PC-9 (cell line): ENCODE measurements at regions of chr1 and their contacts with region 1.

Region 1: GRCh38 chr1:94773931-94774422 is 46.2 kb upstream of the SLC44A3 start:
- DNase-seq: peak; percentile 48 to 92
- H3K4me3 ChIP-seq: no peak overlapping the region
- H3K27ac ChIP-seq: peak overlapping the region; percentile 85
- H3K4me1 ChIP-seq: peaks cover 69% of the 10 kb centered on the region
- H3K27me3 ChIP-seq: no peaks in the 10 kb centered on the region
- CTCF ChIP-seq: no peak

Region 2: GRCh38 chr1:94755675-94756074 is 18.3 kb before region 1 on chr1:
- CTCF ChIA-PET with region 1: interaction called, 10 read pairs
- POLR2A ChIA-PET with region 1: interaction called, 4 read pairs
- intact Hi-C with region 1: no loop called
- DNase-seq: no peak
- H3K4me3 ChIP-seq: no peak overlapping the region
- H3K27ac ChIP-seq: no peak overlapping the region
- H3K4me1 ChIP-seq: peaks cover 7% of the 10 kb centered on the region; the same call in 1 of the 2 replicates
- H3K27me3 ChIP-seq: no peaks in the 10 kb centered on the region
- CTCF ChIP-seq: no peak

Region 3: GRCh38 chr1:94792473-94793295 is 18.7 kb after region 1 on chr1:
- CTCF ChIA-PET with region 1: no interaction called
- POLR2A ChIA-PET with region 1: interaction called, 16 read pairs
- intact Hi-C with region 1: no loop called
- DNase-seq: peak in 1 of 2 experiments; percentile 70
- H3K4me3 ChIP-seq: no peak overlapping the region
- H3K27ac ChIP-seq: peak overlapping the region; percentile 35
- H3K4me1 ChIP-seq: peaks cover 27% of the 10 kb centered on the region
- H3K27me3 ChIP-seq: no peaks in the 10 kb centered on the region
- CTCF ChIP-seq: no peak